ENCODE measurements at regions of chr9 and their contacts with region 1.

Region 1: GRCh38 chr9:107239474-107239873 is 43.6 kb upstream of the RAD23B start:
- DNase-seq: no peak
- ATAC-seq: peak; percentile 31
- H3K4me3 ChIP-seq: no peak overlapping the region
- H3K27ac ChIP-seq: no peak overlapping the region
- H3K4me1 ChIP-seq: peaks cover 16% of the 10 kb centered on the region
- H3K27me3 ChIP-seq: no peaks in the 10 kb centered on the region
- CTCF ChIP-seq: peak in 6 of 7 experiments; percentile 22 to 65 (median 54)
- POLR2A ChIP-seq: no peak

Region 2: DNA sequence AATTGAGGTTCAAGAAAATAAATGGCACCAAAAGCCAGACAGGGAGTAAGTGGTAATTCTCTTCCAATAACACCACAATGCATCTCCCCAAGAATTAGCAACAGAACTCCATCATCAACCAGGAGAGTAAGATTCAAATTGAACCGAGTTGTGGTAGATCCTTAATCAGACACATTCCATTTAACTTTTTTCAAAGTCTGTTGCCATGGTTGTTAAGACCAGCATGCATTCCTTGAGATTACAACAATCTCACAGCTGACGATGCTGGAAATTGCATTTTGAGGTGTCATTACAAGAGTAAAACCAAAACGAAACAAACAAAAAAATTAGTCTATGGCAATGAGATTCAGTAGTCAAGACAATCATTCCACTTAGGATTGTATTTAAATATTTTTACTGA is 455.4 kb before region 1 on chr9:
- intact Hi-C with region 1: no loop called
- DNase-seq: no peak
- ATAC-seq: no peak
- H3K4me3 ChIP-seq: no peak overlapping the region
- H3K27ac ChIP-seq: no peak overlapping the region
- H3K4me1 ChIP-seq: no peaks in the 10 kb centered on the region
- H3K27me3 ChIP-seq: no peaks in the 10 kb centered on the region
- CTCF ChIP-seq: no peak
- POLR2A ChIP-seq: no peak

Region 3: GRCh38 chr9:107328510-107328909 is 89.0 kb after region 1 on chr9:
- intact Hi-C with region 1: no loop called
- DNase-seq: no peak
- ATAC-seq: no peak
- H3K4me3 ChIP-seq: no peak overlapping the region
- H3K27ac ChIP-seq: no peak overlapping the region
- H3K4me1 ChIP-seq: no peaks in the 10 kb centered on the region
- H3K27me3 ChIP-seq: no peaks in the 10 kb centered on the region
- CTCF ChIP-seq: no peak
- POLR2A ChIP-seq: no peak

Region 4: DNA sequence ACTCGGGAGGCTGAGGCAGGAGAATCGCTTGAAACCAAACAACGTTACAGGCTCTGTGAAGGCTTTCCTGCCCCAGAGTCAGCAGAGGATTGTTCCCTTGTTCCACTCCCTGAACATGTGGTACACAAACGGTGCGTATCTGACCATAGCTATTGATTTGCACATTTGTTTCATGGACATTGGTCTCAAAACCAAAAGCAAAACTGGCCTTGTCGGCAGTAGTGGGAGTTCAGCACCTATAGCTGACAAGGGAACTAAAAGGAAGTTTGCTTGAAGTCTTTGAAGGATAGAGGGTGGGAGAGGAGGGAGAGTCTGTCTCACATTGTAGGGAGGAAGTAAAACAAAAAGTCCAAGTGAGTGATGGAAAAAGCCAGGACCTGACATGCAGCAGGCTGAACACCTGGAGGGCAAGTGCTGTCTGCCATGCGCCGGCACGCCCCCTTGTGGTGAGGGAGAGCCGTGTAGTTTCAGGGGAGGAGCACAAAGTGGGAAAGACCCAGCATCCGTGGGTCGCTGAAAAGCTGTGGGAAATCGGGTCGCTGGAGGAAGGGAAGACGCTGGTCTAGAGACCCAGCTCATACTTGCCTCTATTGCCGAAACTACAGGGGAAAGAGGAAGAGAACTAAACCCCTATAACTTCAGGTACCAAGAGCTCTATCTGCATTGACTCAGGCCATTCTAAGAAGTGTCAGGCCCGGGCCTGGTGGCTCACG is 101.6 kb after region 1 on chr9:
- intact Hi-C with region 1: loop called (anchors 10 kb)
- DNase-seq: peak; percentile 81 to 87 (median 84)
- ATAC-seq: peak; percentile 80
- H3K4me3 ChIP-seq: no peak overlapping the region
- H3K27ac ChIP-seq: peak overlapping the region in 1 of 4 donors; percentile 10
- H3K4me1 ChIP-seq: peaks cover 23% of the 10 kb centered on the region
- H3K27me3 ChIP-seq: no peaks in the 10 kb centered on the region
- CTCF ChIP-seq: peak; percentile 85 to 94 (median 91)
- POLR2A ChIP-seq: no peak